Body of pancreas (tissue), 4 donors: ENCODE measurements at regions of chr1 and their contacts with region 1.

Region 1: DNA sequence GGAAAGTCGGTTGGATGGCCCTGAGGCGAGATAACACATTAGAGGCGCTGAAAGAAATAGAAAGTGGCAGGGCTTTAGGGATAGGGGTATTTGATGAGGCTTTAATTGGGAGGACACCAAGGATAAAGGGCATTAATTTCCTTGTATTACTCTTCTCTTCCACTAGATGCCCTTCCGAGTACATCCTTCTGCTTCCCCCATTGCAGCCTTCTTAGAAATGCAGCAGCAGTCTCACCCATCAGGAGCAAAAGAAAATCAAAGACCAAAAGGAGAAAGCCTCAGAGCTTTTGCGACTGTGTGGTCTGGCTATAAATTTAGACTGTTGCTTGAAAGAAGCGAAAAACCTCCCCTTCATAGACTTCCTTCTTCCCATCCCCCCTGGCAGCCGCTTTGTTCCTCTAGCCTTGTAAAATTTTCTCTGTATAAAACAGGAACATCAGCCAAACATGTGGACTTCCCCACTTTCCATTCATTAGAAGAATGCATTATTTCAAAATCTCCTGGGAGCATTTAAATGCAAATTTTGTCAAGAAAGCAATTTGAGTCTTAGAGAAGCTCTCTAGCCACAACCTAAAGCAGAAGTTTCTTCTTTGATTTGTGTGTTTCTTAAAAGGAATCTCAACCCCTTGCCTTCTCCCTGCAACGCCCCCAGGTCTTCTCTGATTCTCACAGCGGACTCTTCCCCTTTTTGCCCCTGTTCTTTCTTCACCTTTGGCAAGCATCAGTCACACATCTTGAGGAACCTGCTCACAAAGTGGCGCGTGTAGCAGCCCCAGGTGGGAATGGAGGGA is 76.6 kb downstream of the NDUFS5 start:
- DNase-seq: peak in 3 of 4 donors; percentile 39 to 62 (median 48)
- ATAC-seq: no peak
- H3K4me3 ChIP-seq: no peak overlapping the region
- H3K27ac ChIP-seq: peak overlapping the region in 1 of 4 donors; percentile 43
- H3K4me1 ChIP-seq: peaks cover 22% of the 10 kb centered on the region
- H3K27me3 ChIP-seq: no peaks in the 10 kb centered on the region
- CTCF ChIP-seq: peak; percentile 46 to 94 (median 91)
- POLR2A ChIP-seq: no peak

Region 2: GRCh38 chr1:39183503-39184353 is 81.0 kb after region 1 on chr1:
- intact Hi-C with region 1: loop called (anchors 10 kb)
- DNase-seq: peak; percentile 55 to 71 (median 64)
- ATAC-seq: peak; percentile 80
- H3K4me3 ChIP-seq: no peak overlapping the region
- H3K27ac ChIP-seq: peak overlapping the region; percentile 11 to 56 (median 47)
- H3K4me1 ChIP-seq: peaks cover 35% of the 10 kb centered on the region
- H3K27me3 ChIP-seq: no peaks in the 10 kb centered on the region
- CTCF ChIP-seq: peak in 6 of 7 experiments; percentile 14 to 55 (median 44)
- POLR2A ChIP-seq: no peak

Region 3: GRCh38 chr1:39230261-39231190 is 127.8 kb after region 1 on chr1:
- intact Hi-C with region 1: no loop called
- DNase-seq: peak in 1 of 4 donors; percentile 27
- ATAC-seq: peak; percentile 33
- H3K4me3 ChIP-seq: no peak overlapping the region
- H3K27ac ChIP-seq: peak overlapping the region in 2 of 4 donors; percentile 24 to 49
- H3K4me1 ChIP-seq: peaks cover 16% of the 10 kb centered on the region
- H3K27me3 ChIP-seq: no peaks in the 10 kb centered on the region
- CTCF ChIP-seq: no peak
- POLR2A ChIP-seq: no peak

Region 4: DNA sequence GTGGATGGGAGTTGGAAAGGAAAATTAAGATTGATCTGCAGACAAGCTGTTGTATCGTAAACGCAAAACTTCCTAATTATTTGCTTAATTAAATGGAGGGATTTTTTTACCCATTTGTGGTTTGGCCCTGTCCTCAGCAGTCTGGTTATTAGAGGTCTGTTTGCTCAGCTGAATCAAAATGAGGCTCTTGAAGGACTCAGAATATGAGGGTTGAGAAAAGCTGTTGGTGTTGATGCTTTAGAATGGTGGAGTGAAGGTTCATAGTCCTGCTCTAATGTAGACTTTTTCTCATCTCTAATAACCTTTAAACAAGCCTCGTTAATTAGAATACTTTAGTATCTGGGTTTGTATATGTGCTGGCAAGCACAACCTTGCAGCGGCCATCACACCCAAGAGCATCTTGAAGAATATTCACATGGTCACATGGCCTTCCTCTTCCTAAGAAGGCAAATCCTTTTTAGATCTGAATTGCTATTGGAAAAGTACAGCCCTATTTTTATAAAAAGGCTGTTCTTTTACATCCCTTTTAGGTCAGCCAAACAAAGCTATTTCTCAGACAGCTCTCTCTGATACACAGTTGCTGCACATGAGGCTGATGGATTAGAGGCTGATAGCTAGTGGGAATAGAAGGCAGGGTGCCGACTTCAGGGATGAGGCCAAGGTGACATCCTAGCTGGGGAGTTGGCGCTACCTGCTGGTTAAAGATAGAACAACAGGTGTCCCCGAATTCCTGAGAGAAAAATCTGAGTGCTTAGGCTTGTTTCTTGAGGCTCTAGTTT is 155.6 kb after region 1 on chr1:
- intact Hi-C with region 1: loop called (anchors 5 kb)
- DNase-seq: peak; percentile 76 to 81 (median 76)
- ATAC-seq: peak; percentile 79
- H3K4me3 ChIP-seq: no peak overlapping the region
- H3K27ac ChIP-seq: no peak overlapping the region
- H3K4me1 ChIP-seq: no peaks in the 10 kb centered on the region
- H3K27me3 ChIP-seq: no peaks in the 10 kb centered on the region
- CTCF ChIP-seq: peak; percentile 77 to 92 (median 88)
- POLR2A ChIP-seq: no peak

Region 5: DNA sequence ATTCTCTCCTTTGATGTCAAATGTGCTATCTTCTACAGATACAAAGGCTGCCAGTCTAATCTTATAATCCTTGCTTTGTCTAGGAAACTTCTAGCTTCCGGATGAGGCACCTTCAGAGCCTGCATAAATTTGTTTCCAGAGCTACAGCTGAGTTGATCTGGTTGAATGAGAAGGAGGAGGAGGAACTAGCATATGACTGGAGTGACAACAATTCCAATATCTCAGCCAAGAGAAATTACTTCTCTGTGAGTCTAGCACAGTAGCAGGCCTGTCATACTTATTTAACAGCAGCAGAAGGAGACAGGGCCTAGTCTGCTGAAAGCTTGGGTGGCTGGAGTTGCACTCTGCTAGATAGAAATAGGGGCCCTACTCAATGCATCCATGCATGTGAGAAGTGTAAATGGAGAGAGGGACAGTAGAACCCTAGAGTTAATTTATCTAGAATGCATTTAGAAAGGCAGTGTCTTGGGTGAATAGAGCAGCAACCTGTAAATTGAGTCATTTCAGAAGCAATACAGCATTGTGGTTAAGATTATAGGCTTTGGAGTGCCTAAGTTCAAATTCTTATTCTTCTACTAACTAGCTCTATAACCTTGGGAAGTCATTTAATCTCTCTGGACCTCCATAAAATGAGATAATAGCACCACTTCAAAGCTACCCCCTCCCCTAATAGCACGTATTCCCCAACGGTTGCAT is 190.8 kb after region 1 on chr1:
- intact Hi-C with region 1: no loop called
- DNase-seq: no peak
- ATAC-seq: no peak
- H3K4me3 ChIP-seq: no peak overlapping the region
- H3K27ac ChIP-seq: peak overlapping the region in 2 of 4 donors; percentile 2 to 15
- H3K4me1 ChIP-seq: peaks cover 31% of the 10 kb centered on the region
- H3K27me3 ChIP-seq: no peaks in the 10 kb centered on the region
- CTCF ChIP-seq: no peak
- POLR2A ChIP-seq: no peak